ENCODE measurements at regions of chr17 and their contacts with region 1.

Region 1: GRCh38 chr17:45293413-45294211 is 23.2 kb downstream of the MAP3K14 start:
- DNase-seq: no peak
- ATAC-seq: peak; percentile 80

Region 2: GRCh38 chr17:45311760-45312476 is 18.3 kb after region 1 on chr17:
- intact Hi-C with region 1: loop called (anchors 2 kb)
- DNase-seq: no peak
- ATAC-seq: peak; percentile 20

Region 3: GRCh38 chr17:45410144-45411091 is 116.8 kb after region 1 on chr17:
- intact Hi-C with region 1: no loop called
- DNase-seq: peak; percentile 83
- ATAC-seq: peak; percentile 45

Region 4: DNA sequence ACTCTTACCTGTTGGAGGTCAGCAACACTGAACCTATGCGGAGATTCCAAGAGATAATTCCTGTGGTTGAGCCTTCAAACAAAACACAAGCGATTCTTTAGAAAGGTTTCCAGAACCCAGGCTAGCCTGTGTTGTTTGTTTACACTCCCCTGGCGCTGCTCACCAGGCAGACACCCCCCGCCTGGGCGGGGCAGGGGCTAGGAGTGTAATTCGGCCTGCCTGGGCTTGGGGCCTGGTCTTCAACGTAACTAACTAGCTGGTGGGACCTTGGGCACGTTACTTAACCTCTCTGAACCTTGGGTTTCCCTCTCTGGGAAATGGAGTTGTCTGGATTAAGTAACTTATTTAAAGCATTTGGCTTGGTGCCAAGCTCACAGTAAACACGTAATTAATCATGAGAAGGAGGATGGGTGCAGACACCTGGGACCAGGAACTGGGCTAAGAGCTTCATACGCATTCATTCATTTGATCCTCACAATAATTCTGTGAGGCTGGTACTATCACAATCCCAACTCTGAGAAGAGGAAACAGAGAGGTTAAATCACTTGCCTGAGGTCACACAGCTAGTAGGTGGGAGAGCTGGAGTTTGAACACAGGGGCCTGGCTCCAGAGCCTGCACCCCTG is 146.7 kb after region 1 on chr17:
- intact Hi-C with region 1: no loop called
- DNase-seq: no peak
- ATAC-seq: no peak